ENCODE measurements at regions of chr6 and their contacts with region 1.

Region 1: DNA sequence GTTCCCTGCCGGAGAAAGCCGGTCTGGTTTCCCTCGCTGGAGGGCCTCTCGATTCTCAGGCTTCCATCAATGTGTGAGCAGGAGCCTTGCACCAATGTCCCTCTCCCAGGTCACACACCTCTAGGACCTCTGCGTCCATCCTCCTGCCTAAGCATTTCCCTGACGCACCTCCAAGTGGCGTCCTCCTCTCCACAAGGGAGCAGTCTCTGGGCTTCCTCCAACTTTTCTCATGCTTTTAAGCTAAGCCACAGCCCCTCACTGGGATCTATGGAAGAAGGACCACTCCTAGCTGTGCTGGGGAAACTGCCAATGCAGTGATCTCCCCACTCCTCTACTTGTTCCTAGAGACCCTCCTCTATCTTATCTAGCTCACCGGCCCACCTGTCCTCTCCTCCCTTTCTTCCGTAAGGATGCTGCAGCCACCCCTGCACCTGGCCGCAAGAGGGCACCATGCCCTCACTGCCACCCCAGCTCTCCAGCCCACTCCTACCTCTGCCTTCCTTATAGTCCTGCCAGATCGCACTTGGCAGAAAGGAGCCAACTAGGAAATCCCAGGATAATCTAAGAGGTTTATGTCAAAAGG is 258.7 kb downstream of the LRFN2 start:
- DNase-seq: no peak
- H3K4me3 ChIP-seq: no peak overlapping the region
- H3K27ac ChIP-seq: no peak overlapping the region
- H3K4me1 ChIP-seq: no peaks in the 10 kb centered on the region
- H3K27me3 ChIP-seq: peaks cover 0 to 49% (median 0%) of the 10 kb centered on the region in 7 donors
- CTCF ChIP-seq: peak; percentile 30 to 66 (median 58)
- POLR2A ChIP-seq: no peak

Region 2: DNA sequence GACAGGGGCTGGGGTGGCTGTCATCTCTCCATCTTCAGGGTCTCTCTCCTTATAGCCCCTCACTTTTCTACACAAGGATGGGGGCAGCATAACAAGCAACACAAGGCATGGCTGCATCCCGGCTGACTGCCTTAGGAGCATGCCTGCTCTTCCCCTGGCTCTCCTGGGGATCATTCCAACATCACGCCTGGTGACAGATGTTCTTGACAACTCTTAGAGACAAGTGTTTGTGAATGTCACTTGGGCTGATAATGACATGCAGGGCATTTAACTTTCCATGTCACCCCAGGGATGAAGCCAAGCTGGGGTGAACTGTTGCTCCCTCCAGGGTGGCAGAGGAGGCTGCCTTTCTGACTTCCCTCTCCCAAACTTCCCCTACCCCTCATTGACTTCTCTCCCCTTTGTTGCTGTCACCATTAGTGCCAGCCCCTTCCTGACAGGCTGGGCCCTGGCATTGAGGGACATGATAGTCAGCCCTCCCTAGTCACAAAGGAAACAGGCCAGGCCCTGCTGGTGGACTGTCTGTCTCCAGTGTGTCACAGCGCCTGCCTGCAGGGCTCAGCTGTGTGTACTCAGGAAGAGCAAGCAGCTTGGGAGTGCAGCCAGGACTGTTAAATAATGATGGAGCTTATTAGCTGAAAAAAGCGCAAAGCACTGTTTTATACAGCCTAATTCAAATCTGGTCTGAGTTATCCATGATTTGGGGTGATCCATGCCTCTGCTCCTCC is 96.9 kb after region 1 on chr6:
- intact Hi-C with region 1: no loop called
- DNase-seq: no peak
- H3K4me3 ChIP-seq: no peak overlapping the region
- H3K27ac ChIP-seq: no peak overlapping the region
- H3K4me1 ChIP-seq: no peaks in the 10 kb centered on the region
- H3K27me3 ChIP-seq: no peaks in the 10 kb centered on the region
- CTCF ChIP-seq: no peak
- POLR2A ChIP-seq: no peak

Region 3: DNA sequence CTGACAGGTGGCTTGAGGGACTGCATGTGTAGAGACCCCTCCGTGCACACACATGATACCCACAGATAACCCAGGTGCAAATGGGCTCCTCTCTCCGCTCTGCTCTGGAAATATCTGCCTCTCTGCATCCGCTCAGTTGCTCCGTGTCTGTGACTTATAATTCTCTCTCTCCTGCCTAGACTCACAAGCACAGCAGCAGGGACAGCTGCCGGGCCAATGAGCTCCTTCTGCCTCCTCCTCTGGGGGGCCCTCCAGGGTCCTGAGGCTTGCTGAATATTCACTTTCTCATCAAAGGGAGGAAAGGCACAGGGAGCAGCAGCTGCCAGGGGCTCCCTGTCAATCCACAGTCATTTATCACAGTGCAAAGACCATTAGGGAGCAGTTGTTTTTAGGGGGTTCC is 234.6 kb after region 1 on chr6:
- intact Hi-C with region 1: no loop called
- DNase-seq: no peak
- H3K4me3 ChIP-seq: no peak overlapping the region
- H3K27ac ChIP-seq: no peak overlapping the region
- H3K4me1 ChIP-seq: peaks cover 0 to 13% (median 0%) of the 10 kb centered on the region in 6 donors
- H3K27me3 ChIP-seq: no peaks in the 10 kb centered on the region
- CTCF ChIP-seq: no peak
- POLR2A ChIP-seq: no peak

Region 4: GRCh38 chr6:40587240-40588069 is 259.0 kb after region 1 on chr6 and contains the start of gene LRFN2:
- intact Hi-C with region 1: loop called (anchors 5 kb)
- DNase-seq: peak; percentile 92
- H3K4me3 ChIP-seq: peak within 1 kb of the TSS; percentile 25 to 72 (median 49)
- H3K27ac ChIP-seq: peak within 1 kb of the TSS in 6 of 8 donors; percentile 9 to 74 (median 68)
- H3K4me1 ChIP-seq: peaks cover 0 to 34% (median 24%) of the 10 kb centered on the region in 6 donors
- H3K27me3 ChIP-seq: peaks cover 0 to 67% (median 22%) of the 10 kb centered on the region in 7 donors
- CTCF ChIP-seq: peak; percentile 46 to 86 (median 76)
- POLR2A ChIP-seq: no peak
- total RNA-seq, gene LRFN2: 0.70 to 6.0 (median 2.3) TPM

Measured in spleen (tissue), 13 donors.